Activated CD4-positive, alpha-beta memory T cell treated with anti-CD3 and anti-CD28 coated beads for 36 hours (primary cell): ENCODE measurements at regions of chr10 and their contacts with region 1.

Region 1: GRCh38 chr10:74213571-74214162 is 62.6 kb downstream of the ADK start:
- DNase-seq: peak; percentile 61
- H3K4me3 Mint-ChIP-seq: no peak overlapping the region
- H3K27ac Mint-ChIP-seq: no peak overlapping the region
- H3K4me1 Mint-ChIP-seq: peaks cover 14% of the 10 kb centered on the region
- H3K27me3 Mint-ChIP-seq: no peaks in the 10 kb centered on the region

Region 2: DNA sequence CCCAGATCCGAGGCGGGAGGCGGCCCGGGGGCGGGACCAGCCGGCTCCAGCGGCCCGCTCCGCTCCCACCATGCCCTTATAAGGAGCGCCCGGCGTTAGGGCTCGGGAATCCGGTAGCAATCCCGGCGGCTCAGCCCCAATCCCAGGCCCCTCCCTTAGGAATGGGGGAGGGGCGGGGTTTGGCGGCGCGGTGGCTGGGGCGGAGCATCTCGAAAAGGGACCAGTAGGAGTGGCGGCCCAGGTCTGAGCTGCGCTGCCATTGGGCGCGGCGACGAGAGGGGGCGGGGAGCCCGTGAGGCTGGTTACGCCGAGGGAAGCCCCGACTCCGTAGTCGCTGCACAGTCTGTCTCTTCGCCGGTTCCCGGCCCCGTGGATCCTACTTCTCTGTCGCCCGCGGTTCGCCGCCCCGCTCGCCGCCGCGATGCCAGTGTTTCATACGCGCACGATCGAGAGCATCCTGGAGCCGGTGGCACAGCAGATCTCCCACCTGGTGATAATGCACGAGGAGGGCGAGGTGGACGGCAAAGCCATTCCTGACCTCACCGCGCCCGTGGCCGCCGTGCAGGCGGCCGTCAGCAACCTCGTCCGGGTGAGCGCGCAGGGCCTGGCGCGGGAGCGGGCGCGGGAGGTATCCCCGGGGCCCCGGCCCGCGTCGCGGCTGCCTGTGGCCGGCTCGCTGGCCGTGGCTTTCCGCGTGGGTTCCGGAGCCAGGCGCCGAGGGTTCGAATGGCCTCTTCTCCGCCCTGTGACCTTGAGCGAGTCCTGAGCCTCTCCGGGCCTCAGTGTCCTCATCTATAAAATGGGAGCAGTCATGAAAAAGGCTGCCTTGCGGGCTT is 215.7 kb before region 1 on chr10 and contains the start of gene VCL:
- CTCF ChIA-PET with region 1: no interaction called
- POLR2A ChIA-PET with region 1: no interaction called
- intact Hi-C with region 1: no loop called
- DNase-seq: peak; percentile 97
- H3K4me3 Mint-ChIP-seq: peak within 1 kb of the TSS; percentile 91
- H3K27ac Mint-ChIP-seq: peak within 1 kb of the TSS; percentile 89
- H3K4me1 Mint-ChIP-seq: peaks cover 33% of the 10 kb centered on the region
- H3K27me3 Mint-ChIP-seq: no peaks in the 10 kb centered on the region
- total RNA-seq, gene VCL: 27.8 to 29.2 TPM

Region 3: DNA sequence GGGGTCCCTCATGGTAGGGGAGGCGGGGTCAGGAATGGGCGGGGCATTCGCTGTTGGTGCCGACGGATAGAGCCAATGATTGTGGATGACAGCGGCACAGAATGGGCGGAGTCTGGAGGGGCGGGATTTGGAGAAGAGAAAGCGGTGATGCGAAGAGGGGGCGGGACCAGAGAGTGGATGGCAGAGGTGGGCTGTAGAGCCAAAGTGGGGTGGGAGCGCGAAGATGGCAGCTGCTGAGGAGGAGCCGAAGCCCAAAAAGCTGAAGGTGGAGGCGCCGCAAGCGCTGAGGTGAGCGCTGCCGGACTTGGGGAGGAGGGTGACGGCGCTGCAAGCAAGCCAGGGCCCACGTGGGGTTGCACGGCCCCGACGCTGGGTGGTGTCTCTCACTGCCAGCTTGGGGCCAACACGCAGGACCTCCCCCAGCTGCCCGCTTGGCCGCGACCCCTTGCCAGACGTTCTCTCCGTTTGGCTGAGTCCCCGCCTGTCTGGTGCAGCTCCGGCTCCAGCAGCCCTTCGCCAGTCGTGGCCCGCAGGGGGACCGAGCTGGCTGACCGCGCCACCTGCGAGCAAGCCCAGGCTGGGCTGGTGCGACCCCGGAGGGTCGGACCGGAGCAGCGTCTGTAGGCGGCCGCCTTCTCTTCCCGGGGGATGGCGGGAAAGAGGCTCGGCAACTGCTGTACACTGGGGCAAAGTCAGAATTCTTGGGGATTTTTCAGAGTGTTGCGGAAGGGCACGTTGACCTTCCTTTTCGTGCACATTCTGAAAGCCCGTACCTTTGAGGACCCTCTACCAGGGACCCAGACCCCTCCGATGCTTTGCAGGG is 62.4 kb before region 1 on chr10 and contains the start of gene ADK:
- CTCF ChIA-PET with region 1: interaction called, 5 read pairs
- POLR2A ChIA-PET with region 1: no interaction called
- intact Hi-C with region 1: loop called (anchors 1 kb)
- DNase-seq: peak; percentile 100
- H3K4me3 Mint-ChIP-seq: no peak within 1 kb of the TSS
- H3K27ac Mint-ChIP-seq: no peak within 1 kb of the TSS
- H3K4me1 Mint-ChIP-seq: peaks cover 39% of the 10 kb centered on the region
- H3K27me3 Mint-ChIP-seq: no peaks in the 10 kb centered on the region
- total RNA-seq, gene ADK: 52.8 to 54.4 TPM

Region 4: GRCh38 chr10:74202356-74202755 is 11.3 kb before region 1 on chr10:
- CTCF ChIA-PET with region 1: interaction called, 13 read pairs
- POLR2A ChIA-PET with region 1: no interaction called
- intact Hi-C with region 1: no loop called
- DNase-seq: no peak
- H3K4me3 Mint-ChIP-seq: no peak overlapping the region
- H3K27ac Mint-ChIP-seq: no peak overlapping the region
- H3K4me1 Mint-ChIP-seq: peaks cover 3% of the 10 kb centered on the region
- H3K27me3 Mint-ChIP-seq: no peaks in the 10 kb centered on the region

Region 5: DNA sequence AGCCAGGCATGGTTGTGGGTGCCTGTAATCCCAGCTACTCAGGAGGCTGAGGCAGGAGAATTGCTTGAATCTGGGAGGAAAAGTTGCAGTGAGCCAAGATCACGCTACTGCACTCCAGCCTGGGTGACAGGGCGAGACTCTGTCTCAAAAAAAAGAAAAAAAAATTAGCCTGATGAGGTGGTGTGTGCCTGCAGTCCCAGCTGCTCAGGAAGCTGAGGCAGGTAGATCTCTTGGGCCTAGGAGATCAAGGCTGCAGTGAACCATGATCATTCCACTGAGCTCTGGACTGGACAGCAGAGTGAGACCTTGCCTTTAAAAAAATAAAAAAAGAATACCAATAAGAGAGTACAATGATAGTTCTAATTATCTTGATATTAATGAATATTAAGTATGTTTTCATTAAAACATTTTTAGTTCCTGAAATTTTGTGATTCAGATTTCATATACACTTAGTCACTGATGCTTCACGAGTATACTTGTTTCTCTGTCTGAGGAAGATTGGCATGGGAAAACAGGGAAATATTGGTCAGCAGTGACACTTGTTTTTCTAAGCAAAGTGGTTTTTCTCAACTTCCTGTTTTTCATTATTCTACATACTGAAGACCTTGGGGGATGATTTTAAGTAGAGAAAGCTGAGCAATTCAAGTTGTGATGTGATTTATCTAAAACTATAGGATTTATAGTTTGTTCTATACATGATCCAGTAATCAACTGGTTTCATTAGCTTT is 14.2 kb after region 1 on chr10:
- CTCF ChIA-PET with region 1: interaction called, 13 read pairs
- POLR2A ChIA-PET with region 1: no interaction called
- intact Hi-C with region 1: no loop called
- DNase-seq: peak; percentile 22
- H3K4me3 Mint-ChIP-seq: no peak overlapping the region
- H3K27ac Mint-ChIP-seq: peak overlapping the region; percentile 84
- H3K4me1 Mint-ChIP-seq: peaks cover 30% of the 10 kb centered on the region
- H3K27me3 Mint-ChIP-seq: no peaks in the 10 kb centered on the region

Region 6: GRCh38 chr10:74244097-74244685 is 30.5 kb after region 1 on chr10:
- CTCF ChIA-PET with region 1: interaction called, 10 read pairs
- POLR2A ChIA-PET with region 1: no interaction called
- intact Hi-C with region 1: no loop called
- DNase-seq: no peak
- H3K4me3 Mint-ChIP-seq: no peak overlapping the region
- H3K27ac Mint-ChIP-seq: no peak overlapping the region
- H3K4me1 Mint-ChIP-seq: no peaks in the 10 kb centered on the region
- H3K27me3 Mint-ChIP-seq: no peaks in the 10 kb centered on the region